Activated B cell treated with CpG ODN at 0.5 μM for 24 hours (primary cell): ENCODE measurements at regions of chr5 and their contacts with region 1.

Region 1: GRCh38 chr5:52657247-52657645 is 130.5 kb upstream of the ITGA1 start:
- DNase-seq: no peak
- ATAC-seq: no peak
- H3K4me3 Mint-ChIP-seq: no peak overlapping the region
- H3K27ac Mint-ChIP-seq: no peak overlapping the region
- H3K4me1 Mint-ChIP-seq: no peaks in the 10 kb centered on the region
- H3K27me3 Mint-ChIP-seq: peaks cover 4% of the 10 kb centered on the region
- CTCF ChIP-seq: no peak

Region 2: DNA sequence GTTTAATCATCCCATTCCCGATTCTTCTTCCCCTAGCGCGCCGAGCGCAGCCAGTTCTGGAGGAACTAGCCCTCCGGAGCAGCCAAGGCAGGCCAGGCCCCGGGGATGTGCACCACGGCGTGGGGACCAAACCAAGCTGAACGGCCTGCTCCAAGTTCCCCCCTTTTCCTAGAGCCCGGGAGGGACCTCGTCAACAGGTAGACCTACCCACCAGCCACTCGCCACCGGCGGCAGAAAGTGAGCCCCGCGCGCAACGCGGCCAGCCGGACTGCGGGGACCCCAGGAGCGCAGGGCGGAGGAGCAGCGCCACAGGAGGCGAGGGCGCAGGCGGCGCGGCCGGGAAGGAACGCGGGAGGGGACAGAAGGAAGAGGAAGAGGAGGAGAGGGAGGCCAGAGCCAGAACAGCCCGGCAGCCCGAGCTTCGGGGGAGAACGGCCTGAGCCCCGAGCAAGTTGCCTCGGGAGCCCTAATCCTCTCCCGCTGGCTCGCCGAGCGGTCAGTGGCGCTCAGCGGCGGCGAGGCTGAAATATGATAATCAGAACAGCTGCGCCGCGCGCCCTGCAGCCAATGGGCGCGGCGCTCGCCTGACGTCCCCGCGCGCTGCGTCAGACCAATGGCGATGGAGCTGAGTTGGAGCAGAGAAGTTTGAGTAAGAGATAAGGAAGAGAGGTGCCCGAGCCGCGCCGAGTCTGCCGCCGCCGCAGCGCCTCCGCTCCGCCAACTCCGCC is 1274.3 kb before region 1 on chr5 and contains the start of gene ISL1:
- CTCF ChIA-PET with region 1: no interaction called
- POLR2A ChIA-PET with region 1: no interaction called
- intact Hi-C with region 1: loop called (anchors 5 kb)
- DNase-seq: no peak
- ATAC-seq: no peak
- H3K4me3 Mint-ChIP-seq: no peak within 1 kb of the TSS
- H3K27ac Mint-ChIP-seq: no peak within 1 kb of the TSS
- H3K4me1 Mint-ChIP-seq: no peaks in the 10 kb centered on the region
- H3K27me3 Mint-ChIP-seq: peaks cover 82% of the 10 kb centered on the region
- CTCF ChIP-seq: no peak
- total RNA-seq, gene ISL1: not detected in 2 replicates